Activated CD4-positive, alpha-beta T cell treated with anti-CD3 and anti-CD28 coated beads for 36 hours (primary cell): ENCODE measurements at regions of chr1 and their contacts with region 1.

Region 1: GRCh38 chr1:198681831-198682759 is 43.3 kb downstream of the PTPRC start:
- DNase-seq: peak; percentile 89
- ATAC-seq: peak; percentile 76
- H3K4me3 Mint-ChIP-seq: peak overlapping the region; percentile 61
- H3K27ac Mint-ChIP-seq: peak overlapping the region; percentile 96
- H3K4me1 Mint-ChIP-seq: peaks cover 85% of the 10 kb centered on the region
- H3K27me3 Mint-ChIP-seq: no peaks in the 10 kb centered on the region

Region 2: DNA sequence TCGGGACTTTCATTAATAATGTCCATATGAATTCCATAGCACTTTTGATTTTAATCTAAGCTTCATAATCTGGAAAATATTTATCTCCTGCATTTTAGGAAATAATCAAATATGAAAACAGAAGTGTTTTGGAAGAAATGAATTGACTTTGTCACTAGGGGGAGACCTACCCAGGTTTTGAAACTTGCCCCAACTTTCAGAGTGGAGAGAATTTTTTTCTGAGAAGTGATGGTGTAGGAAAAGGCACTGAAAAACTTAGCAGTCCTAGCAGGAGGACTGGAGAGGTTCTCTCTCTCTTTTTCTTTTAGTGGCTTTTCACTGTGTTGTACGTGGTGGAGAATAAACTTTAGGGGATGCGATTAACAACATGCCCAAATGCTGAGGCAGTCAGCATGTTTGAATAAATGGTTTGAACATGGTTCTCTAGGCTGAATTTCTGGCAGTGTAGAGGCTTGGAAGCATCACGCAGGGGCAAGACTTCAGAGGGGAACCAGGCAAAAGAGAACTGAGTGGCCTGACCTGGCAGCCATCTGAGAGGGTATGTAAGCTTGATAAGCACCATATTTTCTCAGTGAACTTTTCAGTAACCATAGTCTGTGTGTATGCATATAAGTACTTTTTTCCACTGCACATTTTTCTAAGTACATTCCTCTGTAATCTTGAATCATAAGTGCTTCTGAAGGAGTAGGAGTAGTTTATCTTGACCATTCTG is 593.6 kb before region 1 on chr1:
- CTCF ChIA-PET with region 1: no interaction called
- POLR2A ChIA-PET with region 1: no interaction called
- intact Hi-C with region 1: loop called in 1 of 2 experiments (anchors 5 kb)
- DNase-seq: peak; percentile 16
- ATAC-seq: peak; percentile 65
- H3K4me3 Mint-ChIP-seq: no peak overlapping the region
- H3K27ac Mint-ChIP-seq: no peak overlapping the region
- H3K4me1 Mint-ChIP-seq: peaks cover 8% of the 10 kb centered on the region
- H3K27me3 Mint-ChIP-seq: peaks cover 2% of the 10 kb centered on the region

Region 3: GRCh38 chr1:198377702-198378101 is 304.4 kb before region 1 on chr1:
- CTCF ChIA-PET with region 1: no interaction called
- POLR2A ChIA-PET with region 1: no interaction called
- intact Hi-C with region 1: loop called in 1 of 2 experiments (anchors 5 kb)
- DNase-seq: no peak
- ATAC-seq: peak; percentile 55
- H3K4me3 Mint-ChIP-seq: no peak overlapping the region
- H3K27ac Mint-ChIP-seq: peak overlapping the region; percentile 14
- H3K4me1 Mint-ChIP-seq: peaks cover 32% of the 10 kb centered on the region
- H3K27me3 Mint-ChIP-seq: no peaks in the 10 kb centered on the region

Region 4: DNA sequence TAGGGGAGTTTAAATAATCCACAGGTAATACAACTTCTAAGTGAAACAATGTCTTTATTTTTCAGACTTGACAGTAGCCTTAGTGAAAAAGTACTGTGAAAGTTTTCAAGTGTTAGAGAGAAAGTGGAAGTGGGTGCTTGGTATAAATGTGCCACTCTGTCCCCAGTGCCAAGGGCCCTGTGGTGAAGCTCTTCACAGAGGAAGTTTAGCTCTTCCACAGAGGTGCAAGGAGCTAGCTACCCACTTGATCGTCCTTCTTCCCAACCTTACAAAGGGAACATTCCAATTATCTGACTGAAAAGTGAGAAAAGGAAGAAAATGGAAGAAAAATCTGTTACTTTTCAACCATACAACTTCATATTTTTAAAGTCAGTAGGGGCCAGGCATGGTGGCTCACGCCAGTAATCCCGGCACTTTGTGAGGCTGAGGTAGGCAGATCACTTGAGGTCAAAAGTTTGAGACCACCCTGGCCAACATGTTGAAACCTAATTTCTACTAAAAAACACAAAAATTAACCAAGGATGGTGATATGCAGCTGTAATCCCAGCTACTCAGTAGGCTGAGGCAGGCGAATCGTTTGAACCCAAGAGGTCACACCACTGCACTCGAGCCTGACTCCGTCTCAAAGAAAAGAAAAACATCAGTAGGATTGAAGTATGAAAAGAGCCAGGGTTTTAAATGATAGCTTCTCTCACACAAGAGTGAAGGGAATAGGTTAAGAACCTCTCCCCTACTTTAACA is 84.2 kb before region 1 on chr1:
- CTCF ChIA-PET with region 1: interaction called, 3 read pairs
- POLR2A ChIA-PET with region 1: no interaction called
- intact Hi-C with region 1: loop called in 1 of 2 experiments (anchors 5 kb)
- DNase-seq: no peak
- ATAC-seq: no peak
- H3K4me3 Mint-ChIP-seq: peak overlapping the region; percentile 52
- H3K27ac Mint-ChIP-seq: peak overlapping the region; percentile 87
- H3K4me1 Mint-ChIP-seq: peaks cover 80% of the 10 kb centered on the region
- H3K27me3 Mint-ChIP-seq: no peaks in the 10 kb centered on the region

Region 5: GRCh38 chr1:198657550-198658064 is 24.5 kb before region 1 on chr1:
- CTCF ChIA-PET with region 1: interaction called, 17 read pairs
- POLR2A ChIA-PET with region 1: interaction called, 16 read pairs
- intact Hi-C with region 1: loop called (anchors 1 kb)
- DNase-seq: peak; percentile 55
- ATAC-seq: peak; percentile 48
- H3K4me3 Mint-ChIP-seq: peak overlapping the region; percentile 76
- H3K27ac Mint-ChIP-seq: peak overlapping the region; percentile 94
- H3K4me1 Mint-ChIP-seq: peaks cover 64% of the 10 kb centered on the region
- H3K27me3 Mint-ChIP-seq: no peaks in the 10 kb centered on the region

Region 6: GRCh38 chr1:198829944-198830343 is 147.8 kb after region 1 on chr1:
- CTCF ChIA-PET with region 1: no interaction called
- POLR2A ChIA-PET with region 1: no interaction called
- intact Hi-C with region 1: no loop called
- DNase-seq: peak; percentile 9
- ATAC-seq: no peak
- H3K4me3 Mint-ChIP-seq: no peak overlapping the region
- H3K27ac Mint-ChIP-seq: no peak overlapping the region
- H3K4me1 Mint-ChIP-seq: peaks cover 10% of the 10 kb centered on the region
- H3K27me3 Mint-ChIP-seq: no peaks in the 10 kb centered on the region

Region 7: DNA sequence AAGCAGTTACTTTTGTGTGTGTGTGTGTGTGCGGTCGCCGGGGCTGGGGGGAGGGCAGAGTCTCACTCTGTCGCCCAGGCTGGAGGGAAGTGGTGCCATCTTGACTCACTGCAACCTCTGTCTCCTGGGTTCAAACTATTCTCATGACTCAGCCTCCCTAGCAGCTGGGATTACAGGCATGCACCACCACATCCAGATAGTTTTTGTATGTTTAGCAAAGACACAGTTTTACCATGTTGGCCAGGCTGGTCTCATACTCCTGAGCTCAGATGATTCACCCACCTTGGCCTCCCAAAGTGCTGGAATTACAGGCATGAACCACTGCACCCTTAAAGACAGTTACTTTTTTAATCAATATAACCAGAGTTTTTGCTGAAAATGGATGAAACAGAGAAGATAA is 163.8 kb after region 1 on chr1:
- CTCF ChIA-PET with region 1: no interaction called
- POLR2A ChIA-PET with region 1: no interaction called
- intact Hi-C with region 1: no loop called
- DNase-seq: no peak
- ATAC-seq: no peak
- H3K4me3 Mint-ChIP-seq: no peak overlapping the region
- H3K27ac Mint-ChIP-seq: no peak overlapping the region
- H3K4me1 Mint-ChIP-seq: no peaks in the 10 kb centered on the region
- H3K27me3 Mint-ChIP-seq: no peaks in the 10 kb centered on the region